Tibial artery (tissue), 4 donors: ENCODE measurements at regions of chr22 and their contacts with region 1.

Region 1: GRCh38 chr22:38766076-38766777 is 10.4 kb upstream of the SUN2 start:
- DNase-seq: no peak
- H3K4me3 ChIP-seq: no peak overlapping the region
- H3K27ac ChIP-seq: no peak overlapping the region
- H3K4me1 ChIP-seq: peaks cover 0 to 15% (median 5%) of the 10 kb centered on the region in 4 donors
- H3K27me3 ChIP-seq: peaks cover 0 to 31% of the 10 kb centered on the region in 2 donors
- CTCF ChIP-seq: peak; percentile 26 to 54

Region 2: DNA sequence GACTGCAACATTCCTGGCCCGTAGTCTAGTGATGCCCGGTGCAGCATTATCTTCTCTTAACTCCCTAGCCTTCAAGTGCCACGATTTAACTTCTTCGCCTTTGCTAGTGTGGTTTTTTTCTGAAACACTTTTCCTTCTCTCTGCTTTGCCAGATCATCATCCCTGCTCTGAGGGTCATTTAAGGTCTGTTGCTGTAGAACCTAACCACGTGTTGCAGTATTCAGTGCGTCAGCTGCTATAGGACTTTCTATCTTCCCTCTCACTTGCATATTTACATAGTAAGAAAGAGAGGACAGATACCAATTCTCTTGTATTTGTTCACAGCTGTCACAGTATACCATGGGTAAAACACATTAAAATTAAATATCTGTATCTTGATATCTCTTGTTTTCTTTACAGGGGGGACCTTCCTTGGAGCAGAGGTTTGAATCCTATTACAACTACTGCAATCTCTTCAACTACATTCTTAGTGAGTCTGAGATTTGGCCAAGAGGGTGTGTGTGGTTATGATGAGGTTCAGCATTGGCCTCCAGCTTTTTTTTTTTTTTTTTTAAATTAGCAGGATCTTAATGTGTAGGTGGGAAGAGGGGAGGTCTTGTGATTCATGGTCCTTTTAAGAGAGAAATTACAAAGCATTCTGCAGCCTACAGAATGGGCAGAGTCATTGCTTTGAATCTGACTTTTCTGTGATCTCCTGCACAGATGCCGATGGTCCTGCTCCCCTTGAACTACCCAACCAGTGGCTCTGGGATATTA is 903.5 kb before region 1 on chr22:
- intact Hi-C with region 1: no loop called
- DNase-seq: no peak
- H3K4me3 ChIP-seq: no peak overlapping the region
- H3K27ac ChIP-seq: peak overlapping the region in 1 of 2 donors; percentile 11
- H3K4me1 ChIP-seq: peaks cover 0 to 50% (median 22%) of the 10 kb centered on the region in 4 donors
- H3K27me3 ChIP-seq: no peaks in the 10 kb centered on the region
- CTCF ChIP-seq: no peak

Region 3: GRCh38 chr22:38862375-38863329 is 96.4 kb after region 1 on chr22:
- intact Hi-C with region 1: loop called (anchors 5 kb)
- DNase-seq: peak; percentile 51 to 89
- H3K4me3 ChIP-seq: no peak overlapping the region
- H3K27ac ChIP-seq: peak overlapping the region; percentile 20 to 55
- H3K4me1 ChIP-seq: peaks cover 0 to 67% (median 47%) of the 10 kb centered on the region in 4 donors
- H3K27me3 ChIP-seq: no peaks in the 10 kb centered on the region
- CTCF ChIP-seq: no peak

Region 4: DNA sequence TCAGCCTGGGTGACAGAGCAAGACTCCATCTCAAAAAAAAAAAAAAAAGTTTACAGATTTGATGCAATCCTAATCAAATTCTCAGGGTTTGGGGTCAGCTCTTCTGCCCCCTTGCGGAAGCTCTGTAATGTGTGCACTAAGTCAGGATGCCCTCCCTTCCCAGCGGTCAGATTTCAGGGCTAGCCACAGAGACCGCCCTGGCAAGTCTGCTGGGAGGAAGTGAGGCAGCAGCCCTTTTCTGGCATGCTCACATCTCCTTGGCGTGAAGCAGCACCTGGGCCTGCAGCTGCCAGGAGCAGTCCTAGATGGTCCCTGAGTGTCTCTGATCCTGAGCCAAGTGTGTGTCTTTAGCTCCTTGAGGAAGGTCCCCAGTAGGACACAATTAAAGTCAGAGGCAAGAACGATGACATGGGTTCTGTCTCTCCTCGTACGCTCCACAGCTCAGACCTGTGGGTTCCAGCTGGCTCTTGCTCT is 237.0 kb after region 1 on chr22:
- intact Hi-C with region 1: loop called (anchors 2 kb)
- DNase-seq: peak; percentile 73 to 86
- H3K4me3 ChIP-seq: no peak overlapping the region
- H3K27ac ChIP-seq: no peak overlapping the region
- H3K4me1 ChIP-seq: peaks cover 0 to 4% (median 0%) of the 10 kb centered on the region in 4 donors
- H3K27me3 ChIP-seq: peaks cover 0 to 3% of the 10 kb centered on the region in 2 donors
- CTCF ChIP-seq: peak; percentile 76 to 78